ENCODE measurements at regions of chr7 and their contacts with region 1.

Region 1: GRCh38 chr7:151782598-151783448 is 94.1 kb downstream of the PRKAG2 start:
- DNase-seq: peak; percentile 58 to 92
- H3K4me3 ChIP-seq: peak overlapping the region in 2 of 4 experiments; percentile 7 to 48; a peak in 2 of 8 replicates
- H3K27ac ChIP-seq: no peak overlapping the region
- H3K4me1 ChIP-seq: peaks cover 0 to 4% (median 1%) of the 10 kb centered on the region in 4 experiments; a peak in 2 of 7 replicates
- H3K27me3 ChIP-seq: peaks cover 0 to 6% (median 3%) of the 10 kb centered on the region in 4 experiments; a peak in 4 of 7 replicates
- CTCF ChIP-seq: peak; percentile 84 to 99 (median 95)
- EP300 ChIP-seq: peak in 1 of 2 experiments; percentile 15; a peak in 1 of 3 replicates
- POLR2A ChIP-seq: no peak
- RAD21 ChIP-seq: peak; percentile 62 to 77

Region 2: DNA sequence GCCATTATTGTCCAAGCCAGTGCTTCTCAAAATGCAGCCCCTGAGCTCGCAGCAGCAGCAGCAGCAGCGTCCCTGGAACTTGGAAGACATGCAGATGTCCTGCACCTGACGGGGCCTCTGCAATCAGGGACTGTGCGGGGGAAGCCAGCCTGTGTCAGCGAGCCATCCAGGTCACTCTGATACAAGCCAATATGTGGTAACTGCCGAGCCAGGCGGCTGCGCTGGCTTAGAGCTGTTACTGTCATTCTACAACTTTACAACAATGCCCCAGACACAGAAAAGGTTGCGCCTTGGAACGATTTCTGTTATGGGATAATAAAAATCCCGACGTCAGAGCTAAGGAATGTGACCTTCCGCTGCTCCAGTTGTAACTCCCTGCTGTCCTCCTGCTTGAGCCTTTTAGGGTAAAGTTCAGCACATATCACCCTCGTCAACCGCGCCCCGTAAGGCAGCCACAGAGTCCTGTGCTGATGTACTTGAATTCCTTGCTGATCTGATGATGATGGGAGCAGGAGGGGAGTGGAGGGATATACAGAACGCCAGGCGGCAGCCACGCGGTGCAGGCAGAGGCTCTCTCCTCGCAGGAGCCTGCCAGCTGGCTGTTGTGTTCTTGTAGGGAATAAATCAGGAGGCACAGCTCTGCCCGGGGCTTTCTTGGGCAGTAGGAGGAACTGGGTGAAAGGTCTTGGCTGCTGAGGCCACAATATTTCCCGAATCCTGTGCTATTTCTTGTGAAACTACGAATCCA is 322.9 kb before region 1 on chr7:
- CTCF ChIA-PET with region 1: no interaction called
- POLR2A ChIA-PET with region 1: no interaction called
- DNase-seq: peak in 1 of 2 experiments; percentile 67
- H3K4me3 ChIP-seq: peak overlapping the region in 1 of 4 experiments; percentile 4; a peak in 1 of 8 replicates
- H3K27ac ChIP-seq: no peak overlapping the region; the same call in 1 of the 2 replicates
- H3K4me1 ChIP-seq: peaks cover 14 to 36% (median 25%) of the 10 kb centered on the region in 4 experiments
- H3K27me3 ChIP-seq: no peaks in the 10 kb centered on the region
- CTCF ChIP-seq: no peak
- EP300 ChIP-seq: no peak
- POLR2A ChIP-seq: no peak; a peak in 1 of 3 replicates
- RAD21 ChIP-seq: no peak

Region 3: GRCh38 chr7:151493083-151493482 is 289.7 kb before region 1 on chr7:
- CTCF ChIA-PET with region 1: no interaction called
- POLR2A ChIA-PET with region 1: no interaction called
- DNase-seq: no peak
- H3K4me3 ChIP-seq: no peak overlapping the region
- H3K27ac ChIP-seq: no peak overlapping the region
- H3K4me1 ChIP-seq: peaks cover 4 to 10% (median 7%) of the 10 kb centered on the region in 4 experiments; a peak in 6 of 7 replicates
- H3K27me3 ChIP-seq: no peaks in the 10 kb centered on the region
- CTCF ChIP-seq: no peak
- EP300 ChIP-seq: no peak
- POLR2A ChIP-seq: no peak
- RAD21 ChIP-seq: no peak

Region 4: GRCh38 chr7:151599401-151600227 is 183.2 kb before region 1 on chr7:
- CTCF ChIA-PET with region 1: interaction called, 12 read pairs
- POLR2A ChIA-PET with region 1: no interaction called
- DNase-seq: no peak
- H3K4me3 ChIP-seq: no peak overlapping the region
- H3K27ac ChIP-seq: no peak overlapping the region
- H3K4me1 ChIP-seq: no peaks in the 10 kb centered on the region
- H3K27me3 ChIP-seq: no peaks in the 10 kb centered on the region
- CTCF ChIP-seq: no peak
- EP300 ChIP-seq: no peak
- POLR2A ChIP-seq: no peak
- RAD21 ChIP-seq: no peak

Region 5: GRCh38 chr7:151742713-151743480 is 39.9 kb before region 1 on chr7:
- CTCF ChIA-PET with region 1: no interaction called
- POLR2A ChIA-PET with region 1: no interaction called
- DNase-seq: peak in 1 of 2 experiments; percentile 47
- H3K4me3 ChIP-seq: no peak overlapping the region
- H3K27ac ChIP-seq: no peak overlapping the region
- H3K4me1 ChIP-seq: peaks cover 6 to 16% (median 10%) of the 10 kb centered on the region in 4 experiments; a peak in 6 of 7 replicates
- H3K27me3 ChIP-seq: no peaks in the 10 kb centered on the region
- CTCF ChIP-seq: no peak
- EP300 ChIP-seq: no peak
- POLR2A ChIP-seq: no peak
- RAD21 ChIP-seq: no peak

Region 6: DNA sequence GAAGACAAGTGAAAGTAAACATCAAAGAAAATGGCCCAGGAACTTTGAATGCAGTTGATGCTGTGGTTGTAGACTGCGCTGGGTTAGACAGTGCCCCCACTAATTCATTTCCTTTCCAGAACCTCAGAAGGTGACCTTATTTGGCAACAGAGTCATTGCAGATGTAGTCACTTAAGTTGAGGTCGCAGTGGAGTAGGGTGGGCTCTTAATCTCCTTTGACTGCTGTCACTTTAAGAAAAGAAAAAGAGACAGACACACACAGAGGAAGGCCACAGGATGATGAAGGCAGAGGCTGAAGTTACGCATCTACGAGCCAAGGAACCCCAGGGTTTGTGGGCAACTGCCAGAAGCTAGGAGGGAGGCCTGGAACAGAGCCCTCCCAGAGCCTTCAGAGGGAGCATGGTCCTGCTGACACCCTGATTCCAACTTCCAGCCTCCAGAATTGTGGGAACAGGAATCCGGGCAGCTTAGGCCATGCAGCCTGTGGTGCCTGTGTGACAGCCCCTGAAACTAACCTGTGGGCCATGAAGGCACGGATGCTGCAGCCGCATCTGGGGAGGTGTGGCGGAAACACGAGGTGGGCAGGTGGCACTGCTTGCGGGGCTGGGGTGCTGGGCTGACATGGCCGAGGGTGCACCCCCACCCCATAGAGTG is 13.5 kb before region 1 on chr7:
- CTCF ChIA-PET with region 1: interaction called, 35 read pairs
- POLR2A ChIA-PET with region 1: interaction called, 3 read pairs
- DNase-seq: no peak
- H3K4me3 ChIP-seq: no peak overlapping the region
- H3K27ac ChIP-seq: no peak overlapping the region
- H3K4me1 ChIP-seq: peaks cover 0 to 4% (median 0%) of the 10 kb centered on the region in 4 experiments; a peak in 1 of 7 replicates
- H3K27me3 ChIP-seq: 0 out of 7 replicates have a peak, but pooled peaks cover 0 to 1% (median 0%) of the 10 kb centered on the region in 4 experiments
- CTCF ChIP-seq: no peak
- EP300 ChIP-seq: no peak
- POLR2A ChIP-seq: no peak
- RAD21 ChIP-seq: no peak

Region 7: GRCh38 chr7:151806204-151806603 is 23.4 kb after region 1 on chr7:
- CTCF ChIA-PET with region 1: interaction called, 11 read pairs
- POLR2A ChIA-PET with region 1: no interaction called
- DNase-seq: no peak
- H3K4me3 ChIP-seq: no peak overlapping the region
- H3K27ac ChIP-seq: no peak overlapping the region
- H3K4me1 ChIP-seq: no peaks in the 10 kb centered on the region
- H3K27me3 ChIP-seq: no peaks in the 10 kb centered on the region
- CTCF ChIP-seq: no peak
- EP300 ChIP-seq: no peak
- POLR2A ChIP-seq: no peak
- RAD21 ChIP-seq: no peak

Region 8: DNA sequence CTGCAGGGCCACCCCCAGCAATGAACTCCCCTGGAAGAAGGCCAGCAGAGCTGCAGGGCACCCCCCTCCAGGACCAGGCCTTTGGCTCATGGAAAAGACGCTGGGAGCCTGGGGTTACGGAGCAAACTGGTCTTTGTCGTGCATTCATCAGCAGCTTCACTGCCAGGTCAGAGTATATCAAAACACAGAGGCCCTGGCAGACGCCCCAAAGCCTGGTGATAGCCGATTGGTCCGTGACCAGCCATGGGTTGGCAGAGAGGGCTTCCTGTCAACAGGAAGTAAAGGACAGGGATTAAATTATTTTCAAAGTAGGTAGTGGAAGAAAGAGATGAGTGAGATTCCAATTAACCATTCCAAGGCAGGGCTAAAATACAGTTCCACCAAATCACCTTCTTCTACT is 85.1 kb after region 1 on chr7:
- CTCF ChIA-PET with region 1: interaction called, 22 read pairs
- POLR2A ChIA-PET with region 1: no interaction called
- DNase-seq: no peak
- H3K4me3 ChIP-seq: no peak overlapping the region
- H3K27ac ChIP-seq: no peak overlapping the region
- H3K4me1 ChIP-seq: peaks cover 0 to 4% (median 3%) of the 10 kb centered on the region in 4 experiments; a peak in 5 of 7 replicates
- H3K27me3 ChIP-seq: no peaks in the 10 kb centered on the region; a peak in 1 of 7 replicates
- CTCF ChIP-seq: no peak
- EP300 ChIP-seq: no peak
- POLR2A ChIP-seq: no peak
- RAD21 ChIP-seq: no peak

Measured in H1 (cell line).